A549 (cell line): ENCODE measurements at regions of chr20 and their contacts with region 1.

Region 1: GRCh38 chr20:4560667-4561066 is 161.0 kb upstream of the PRND start:
- DNase-seq: no peak
- ATAC-seq: no peak
- H3K4me3 ChIP-seq: no peak overlapping the region
- H3K27ac ChIP-seq: no peak overlapping the region
- H3K4me1 ChIP-seq: peaks cover 11% of the 10 kb centered on the region
- CTCF ChIP-seq: no peak
- EP300 ChIP-seq: no peak
- POLR2A ChIP-seq: no peak
- RAD21 ChIP-seq: no peak

Region 2: DNA sequence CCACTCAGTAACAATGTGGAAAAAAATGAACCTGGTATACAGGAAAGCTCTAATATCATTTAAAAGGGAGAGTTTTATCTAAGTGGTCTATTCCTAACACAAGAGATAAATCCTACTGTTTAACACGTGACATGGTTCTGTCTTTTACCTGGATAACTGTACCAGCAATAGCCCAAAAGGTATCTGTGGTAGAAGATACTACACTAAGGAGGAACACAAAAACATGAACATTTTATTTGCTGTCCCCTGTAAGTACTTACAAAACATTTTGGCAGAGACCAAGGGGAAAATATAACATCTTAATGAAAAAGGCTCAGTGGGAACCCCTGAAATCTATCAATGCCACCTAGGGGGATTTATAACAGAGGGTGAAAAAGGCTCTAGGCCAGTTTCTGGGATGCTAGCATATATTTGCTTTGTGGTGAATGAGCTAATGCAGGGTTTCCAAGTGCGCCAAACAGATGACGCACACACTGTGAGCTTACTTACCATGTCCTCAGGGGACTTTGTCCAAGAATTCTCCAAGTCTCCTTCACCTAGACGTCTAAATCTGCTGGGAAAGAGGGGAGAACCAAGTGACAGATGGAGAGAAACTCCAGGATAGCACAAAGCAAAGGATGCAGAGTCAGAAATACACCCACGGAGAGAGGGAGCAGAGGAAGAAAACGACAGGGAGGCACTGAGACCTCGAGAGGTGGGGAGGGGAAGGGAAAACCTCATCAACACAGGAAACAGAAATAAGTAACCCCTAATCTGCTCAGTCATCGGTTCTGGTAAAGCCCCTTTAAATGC is 13.1 kb after region 1 on chr20:
- CTCF ChIA-PET with region 1: interaction called, 11 read pairs
- POLR2A ChIA-PET with region 1: interaction called, 4 read pairs
- DNase-seq: peak; percentile 94 to 99
- ATAC-seq: peak; percentile 97 to 98
- H3K4me3 ChIP-seq: peak overlapping the region; percentile 25
- H3K27ac ChIP-seq: peak overlapping the region; percentile 88 to 91
- H3K4me1 ChIP-seq: peaks cover 57% of the 10 kb centered on the region
- CTCF ChIP-seq: no peak; the same call in 2 of the 3 replicates
- EP300 ChIP-seq: peak; percentile 84 to 92; a peak in 4 of 5 replicates
- POLR2A ChIP-seq: no peak
- RAD21 ChIP-seq: peak; percentile 29 to 71